ENCODE measurements at regions of chr4 and their contacts with region 1.

Region 1: GRCh38 chr4:38759113-38759789 is 23.5 kb downstream of the TLR10 start:
- DNase-seq: no peak
- ATAC-seq: no peak
- H3K4me3 Mint-ChIP-seq: peak overlapping the region; percentile 4
- H3K27ac Mint-ChIP-seq: peak overlapping the region; percentile 80
- H3K4me1 Mint-ChIP-seq: peaks cover 70% of the 10 kb centered on the region
- H3K27me3 Mint-ChIP-seq: no peaks in the 10 kb centered on the region
- CTCF ChIP-seq: no peak

Region 2: DNA sequence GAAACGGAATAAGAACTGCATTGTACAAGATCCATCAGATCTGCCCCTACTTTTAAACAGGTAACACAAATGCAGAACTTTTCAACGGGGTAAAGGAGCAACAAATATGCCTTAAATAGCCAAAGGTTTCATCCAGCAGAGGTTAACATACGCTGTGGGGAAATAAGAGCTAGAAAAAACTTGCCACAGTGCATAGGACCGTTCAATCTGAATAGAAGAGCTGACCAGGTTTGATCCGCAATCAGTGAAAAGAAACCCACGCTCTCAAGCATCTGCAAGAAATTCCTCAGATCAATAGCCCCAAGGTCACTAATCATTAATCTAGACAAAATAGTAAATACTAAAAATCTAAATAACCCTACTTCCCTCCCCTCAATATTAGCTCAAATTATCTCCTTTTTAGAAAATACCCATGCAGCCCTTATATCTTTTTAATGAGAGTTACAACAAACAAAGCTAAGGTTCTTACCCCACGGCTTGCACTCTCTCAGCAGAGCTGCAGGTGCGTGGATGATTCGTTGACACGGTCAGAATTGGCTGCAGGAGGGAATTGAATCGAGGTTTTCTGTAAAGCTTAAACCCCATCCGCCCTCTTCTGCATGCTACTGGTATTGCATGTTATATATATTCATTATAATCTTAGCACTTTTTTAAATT is 23.3 kb after region 1 on chr4 and contains the start of gene TLR10:
- CTCF ChIA-PET with region 1: interaction called, 331 read pairs
- POLR2A ChIA-PET with region 1: interaction called, 249 read pairs
- intact Hi-C with region 1: loop called (anchors 1 kb)
- DNase-seq: no peak
- ATAC-seq: peak; percentile 80
- H3K4me3 Mint-ChIP-seq: peak within 1 kb of the TSS; percentile 100
- H3K27ac Mint-ChIP-seq: peak within 1 kb of the TSS; percentile 98
- H3K4me1 Mint-ChIP-seq: peaks cover 64% of the 10 kb centered on the region
- H3K27me3 Mint-ChIP-seq: no peaks in the 10 kb centered on the region
- CTCF ChIP-seq: no peak
- total RNA-seq, gene TLR10: 92.0 and 107 TPM in 2 replicates

Region 3: GRCh38 chr4:38815885-38816782 is 56.9 kb after region 1 on chr4:
- CTCF ChIA-PET with region 1: interaction called, 5 read pairs
- POLR2A ChIA-PET with region 1: interaction called, 15 read pairs
- intact Hi-C with region 1: loop called (anchors 1 kb)
- DNase-seq: no peak
- ATAC-seq: peak; percentile 74
- H3K4me3 Mint-ChIP-seq: peak overlapping the region; percentile 82
- H3K27ac Mint-ChIP-seq: peak overlapping the region; percentile 94
- H3K4me1 Mint-ChIP-seq: peaks cover 74% of the 10 kb centered on the region
- H3K27me3 Mint-ChIP-seq: no peaks in the 10 kb centered on the region
- CTCF ChIP-seq: no peak

Region 4: DNA sequence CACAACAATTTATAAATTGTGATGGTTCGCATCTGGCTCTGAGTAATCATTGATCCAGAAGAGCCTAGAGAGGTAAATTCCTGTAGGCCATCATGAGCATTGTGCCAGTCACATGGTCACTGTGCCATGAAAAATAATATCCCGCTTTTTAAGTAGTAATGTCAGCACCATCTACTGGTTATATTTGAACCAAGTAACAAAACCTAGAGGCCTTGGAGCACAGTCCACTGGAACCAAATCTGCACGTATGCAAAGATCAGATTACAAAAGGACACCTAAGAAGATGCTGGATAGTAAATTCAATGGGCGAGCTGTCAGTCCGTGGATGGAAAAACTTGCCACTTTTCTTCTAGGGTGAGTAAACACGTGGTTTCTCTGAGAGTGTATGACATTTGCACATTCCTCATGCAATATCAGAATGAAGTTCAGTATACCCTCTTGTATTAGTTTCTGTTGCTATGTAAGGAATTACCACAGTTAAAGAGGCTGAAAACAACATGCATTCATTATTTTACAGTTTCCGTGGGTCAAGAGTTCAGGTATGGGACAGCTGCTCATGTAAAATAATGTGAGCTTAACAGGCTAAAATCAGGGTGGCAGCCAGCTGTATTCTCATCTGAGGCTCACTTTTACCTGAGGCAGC is 135.2 kb after region 1 on chr4:
- CTCF ChIA-PET with region 1: interaction called, 85 read pairs
- POLR2A ChIA-PET with region 1: no interaction called
- intact Hi-C with region 1: loop called (anchors 1 kb)
- DNase-seq: no peak
- ATAC-seq: no peak
- H3K4me3 Mint-ChIP-seq: no peak overlapping the region
- H3K27ac Mint-ChIP-seq: no peak overlapping the region
- H3K4me1 Mint-ChIP-seq: peaks cover 1% of the 10 kb centered on the region
- H3K27me3 Mint-ChIP-seq: no peaks in the 10 kb centered on the region
- CTCF ChIP-seq: no peak

Region 5: GRCh38 chr4:39044364-39044955 is 285.2 kb after region 1 on chr4:
- CTCF ChIA-PET with region 1: interaction called, 8 read pairs
- POLR2A ChIA-PET with region 1: interaction called, 28 read pairs
- intact Hi-C with region 1: loop called (anchors 1 kb)
- DNase-seq: peak; percentile 96
- ATAC-seq: peak; percentile 86
- H3K4me3 Mint-ChIP-seq: peak overlapping the region; percentile 86
- H3K27ac Mint-ChIP-seq: peak overlapping the region; percentile 88
- H3K4me1 Mint-ChIP-seq: peaks cover 62% of the 10 kb centered on the region
- H3K27me3 Mint-ChIP-seq: no peaks in the 10 kb centered on the region
- CTCF ChIP-seq: no peak

Region 6: DNA sequence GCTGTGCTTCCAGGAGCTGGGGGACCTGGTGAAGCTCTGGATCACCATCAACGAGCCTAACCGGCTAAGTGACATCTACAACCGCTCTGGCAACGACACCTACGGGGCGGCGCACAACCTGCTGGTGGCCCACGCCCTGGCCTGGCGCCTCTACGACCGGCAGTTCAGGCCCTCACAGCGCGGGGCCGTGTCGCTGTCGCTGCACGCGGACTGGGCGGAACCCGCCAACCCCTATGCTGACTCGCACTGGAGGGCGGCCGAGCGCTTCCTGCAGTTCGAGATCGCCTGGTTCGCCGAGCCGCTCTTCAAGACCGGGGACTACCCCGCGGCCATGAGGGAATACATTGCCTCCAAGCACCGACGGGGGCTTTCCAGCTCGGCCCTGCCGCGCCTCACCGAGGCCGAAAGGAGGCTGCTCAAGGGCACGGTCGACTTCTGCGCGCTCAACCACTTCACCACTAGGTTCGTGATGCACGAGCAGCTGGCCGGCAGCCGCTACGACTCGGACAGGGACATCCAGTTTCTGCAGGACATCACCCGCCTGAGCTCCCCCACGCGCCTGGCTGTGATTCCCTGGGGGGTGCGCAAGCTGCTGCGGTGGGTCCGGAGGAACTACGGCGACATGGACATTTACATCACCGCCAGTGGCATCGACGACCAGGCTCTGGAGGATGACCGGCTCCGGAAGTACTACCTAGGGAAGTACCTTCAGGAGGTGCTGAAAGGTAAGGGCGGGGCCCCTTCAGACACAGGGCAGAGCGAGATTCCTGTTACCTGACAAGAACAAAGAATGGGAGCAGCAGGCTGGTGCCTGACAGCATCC is 687.7 kb after region 1 on chr4:
- CTCF ChIA-PET with region 1: interaction called, 3 read pairs
- POLR2A ChIA-PET with region 1: interaction called, 3 read pairs
- intact Hi-C with region 1: loop called (anchors 2 kb)
- DNase-seq: peak; percentile 80
- ATAC-seq: peak; percentile 94
- H3K4me3 Mint-ChIP-seq: peak overlapping the region; percentile 83
- H3K27ac Mint-ChIP-seq: peak overlapping the region; percentile 90
- H3K4me1 Mint-ChIP-seq: peaks cover 27% of the 10 kb centered on the region
- H3K27me3 Mint-ChIP-seq: no peaks in the 10 kb centered on the region
- CTCF ChIP-seq: no peak

Measured in activated B cell treated with CpG ODN at 0.5 μM for 24 hours (primary cell).